Ascending aorta (tissue), 2 donors: ENCODE measurements at regions of chr16 and their contacts with region 1.

Region 1: GRCh38 chr16:74862741-74863244 is 88.2 kb upstream of the FA2H start:
- DNase-seq: no peak
- H3K4me3 ChIP-seq: no peak overlapping the region
- H3K27ac ChIP-seq: no peak overlapping the region
- H3K4me1 ChIP-seq: peaks cover 0 to 4% of the 10 kb centered on the region in 2 donors
- H3K27me3 ChIP-seq: no peaks in the 10 kb centered on the region
- CTCF ChIP-seq: peak; percentile 51 to 82 (median 67)

Region 2: DNA sequence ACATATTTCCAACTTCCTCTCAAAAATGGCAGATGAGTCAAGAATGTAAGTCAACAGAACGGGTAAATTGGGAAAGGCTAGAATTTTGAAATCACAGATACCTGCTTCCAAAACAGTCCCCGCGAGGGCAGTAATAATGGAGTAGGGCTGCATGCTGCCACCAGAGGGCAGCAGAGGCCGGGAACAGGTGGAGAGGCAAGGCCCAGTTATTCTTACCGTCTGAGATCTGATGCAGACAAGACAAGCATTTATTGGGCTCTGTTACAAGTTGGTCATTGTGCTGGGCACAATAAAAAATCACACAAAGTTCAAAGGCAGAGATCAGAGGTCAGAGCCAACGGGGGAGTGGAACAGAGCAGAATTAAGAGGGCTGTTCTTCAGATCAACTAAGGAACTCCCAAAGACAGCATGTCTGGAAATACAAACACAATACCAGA is 153.3 kb before region 1 on chr16:
- intact Hi-C with region 1: loop called (anchors 1 kb)
- DNase-seq: peak in 1 of 2 donors; percentile 81
- H3K4me3 ChIP-seq: no peak overlapping the region
- H3K27ac ChIP-seq: no peak overlapping the region
- H3K4me1 ChIP-seq: no peaks in the 10 kb centered on the region
- H3K27me3 ChIP-seq: no peaks in the 10 kb centered on the region
- CTCF ChIP-seq: peak; percentile 82 to 95 (median 93)

Region 3: GRCh38 chr16:74811911-74812310 is 50.9 kb before region 1 on chr16:
- intact Hi-C with region 1: no loop called
- DNase-seq: no peak
- H3K4me3 ChIP-seq: no peak overlapping the region
- H3K27ac ChIP-seq: no peak overlapping the region
- H3K4me1 ChIP-seq: no peaks in the 10 kb centered on the region
- H3K27me3 ChIP-seq: no peaks in the 10 kb centered on the region
- CTCF ChIP-seq: no peak